ENCODE measurements at regions of chr15 and their contacts with region 1.

Region 1: GRCh38 chr15:88904624-88905327 is 8.4 kb downstream of the MFGE8 start:
- DNase-seq: peak; percentile 79
- ATAC-seq: peak; percentile 93
- H3K4me3 ChIP-seq: no peak overlapping the region
- H3K27ac ChIP-seq: no peak overlapping the region
- H3K4me1 ChIP-seq: peaks cover 10% of the 10 kb centered on the region
- H3K27me3 ChIP-seq: no peaks in the 10 kb centered on the region
- CTCF ChIP-seq: peak; percentile 95
- EP300 ChIP-seq: no peak
- POLR2A ChIP-seq: no peak
- RAD21 ChIP-seq: peak; percentile 81

Region 2: GRCh38 chr15:88932271-88932874 is 27.6 kb after region 1 on chr15:
- CTCF ChIA-PET with region 1: no interaction called
- POLR2A ChIA-PET with region 1: no interaction called
- in situ Hi-C with region 1: no loop called
- intact Hi-C with region 1: no loop called
- DNase-seq: peak; percentile 81
- ATAC-seq: peak; percentile 79
- H3K4me3 ChIP-seq: no peak overlapping the region
- H3K27ac ChIP-seq: no peak overlapping the region
- H3K4me1 ChIP-seq: peaks cover 26% of the 10 kb centered on the region
- H3K27me3 ChIP-seq: no peaks in the 10 kb centered on the region
- CTCF ChIP-seq: no peak
- EP300 ChIP-seq: no peak
- POLR2A ChIP-seq: no peak
- RAD21 ChIP-seq: no peak

Region 3: DNA sequence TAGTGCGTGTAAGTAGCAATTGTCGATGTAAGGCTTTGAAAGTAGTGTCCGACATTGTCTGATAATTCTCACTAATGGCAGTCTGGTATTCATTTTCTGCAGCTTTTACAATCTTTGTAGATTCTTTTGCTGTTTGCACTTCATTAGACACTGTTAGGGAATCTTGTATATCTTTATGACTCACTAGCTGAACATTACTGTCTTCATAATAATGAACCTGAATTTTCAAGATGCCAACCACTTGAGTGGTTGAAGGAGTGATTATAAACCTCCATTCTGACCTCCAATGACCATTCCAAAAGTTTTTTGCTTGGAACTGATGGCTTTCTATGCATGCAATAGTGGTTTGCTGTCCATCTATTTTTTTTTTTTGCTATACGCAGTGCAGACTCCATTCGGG is 84.8 kb after region 1 on chr15:
- CTCF ChIA-PET with region 1: no interaction called
- POLR2A ChIA-PET with region 1: no interaction called
- in situ Hi-C with region 1: no loop called
- intact Hi-C with region 1: no loop called
- DNase-seq: no peak
- ATAC-seq: no peak
- H3K4me3 ChIP-seq: no peak overlapping the region
- H3K27ac ChIP-seq: no peak overlapping the region
- H3K4me1 ChIP-seq: peaks cover 14% of the 10 kb centered on the region
- H3K27me3 ChIP-seq: no peaks in the 10 kb centered on the region
- CTCF ChIP-seq: no peak
- EP300 ChIP-seq: no peak
- POLR2A ChIP-seq: no peak
- RAD21 ChIP-seq: no peak

Region 4: GRCh38 chr15:89003865-89004725 is 99.3 kb after region 1 on chr15:
- CTCF ChIA-PET with region 1: interaction called, 8 read pairs
- POLR2A ChIA-PET with region 1: no interaction called
- in situ Hi-C with region 1: loop called (anchors 5 kb)
- intact Hi-C with region 1: loop called (anchors 1 kb)
- DNase-seq: peak; percentile 41
- ATAC-seq: peak; percentile 99
- H3K4me3 ChIP-seq: peak overlapping the region in 1 of 3 experiments; percentile 16; a peak in 1 of 6 replicates
- H3K27ac ChIP-seq: no peak overlapping the region
- H3K4me1 ChIP-seq: peaks cover 21% of the 10 kb centered on the region
- H3K27me3 ChIP-seq: peaks cover 0 to 4% of the 10 kb centered on the region in 2 experiments; a peak in 3 of 5 replicates
- CTCF ChIP-seq: peak; percentile 81
- EP300 ChIP-seq: no peak
- POLR2A ChIP-seq: no peak
- RAD21 ChIP-seq: peak; percentile 48; the same call in 1 of the 2 replicates

Region 5: DNA sequence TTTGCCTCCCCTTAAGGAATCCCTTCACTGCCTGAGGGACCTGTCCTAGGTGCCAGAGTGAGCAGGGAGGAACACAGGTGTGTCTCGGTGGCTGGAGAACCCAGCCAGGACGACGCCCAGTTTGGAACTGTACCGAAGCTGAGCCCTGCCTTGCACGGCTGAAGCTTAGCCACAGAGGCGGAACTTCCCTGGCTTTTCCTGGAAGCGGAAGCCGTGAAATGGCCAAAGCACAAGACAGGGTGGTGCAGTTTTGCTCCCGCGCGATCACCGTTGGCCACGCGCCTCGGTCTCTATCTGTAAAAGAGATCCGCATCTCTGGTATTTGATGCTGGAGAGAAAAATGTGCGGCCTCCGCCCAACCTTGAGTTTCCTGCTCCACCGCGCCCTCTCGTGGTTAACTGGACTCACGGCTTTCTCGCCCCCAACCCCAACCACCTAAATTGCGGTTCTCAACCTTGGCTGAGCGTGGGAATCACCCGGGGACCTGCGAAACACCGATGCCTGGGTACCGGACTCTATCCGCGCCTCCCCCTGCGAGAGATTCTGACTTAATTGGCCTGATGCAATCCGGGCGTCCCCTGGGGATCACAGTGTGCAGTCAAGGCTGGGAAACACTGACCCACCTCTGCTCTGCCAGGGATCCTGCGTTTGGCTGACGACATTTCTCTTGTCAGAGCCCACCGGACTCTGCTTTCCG is 112.7 kb after region 1 on chr15:
- CTCF ChIA-PET with region 1: interaction called, 25 read pairs
- POLR2A ChIA-PET with region 1: no interaction called
- in situ Hi-C with region 1: no loop called
- intact Hi-C with region 1: loop called (anchors 1 kb)
- DNase-seq: peak; percentile 54
- ATAC-seq: peak; percentile 94
- H3K4me3 ChIP-seq: no peak overlapping the region; a peak in 1 of 6 replicates
- H3K27ac ChIP-seq: no peak overlapping the region
- H3K4me1 ChIP-seq: no peaks in the 10 kb centered on the region
- H3K27me3 ChIP-seq: peaks cover 2 to 14% of the 10 kb centered on the region in 2 experiments; a peak in 4 of 5 replicates
- CTCF ChIP-seq: peak; percentile 86
- EP300 ChIP-seq: no peak
- POLR2A ChIP-seq: no peak
- RAD21 ChIP-seq: peak; percentile 64; the same call in 1 of the 2 replicates

Region 6: DNA sequence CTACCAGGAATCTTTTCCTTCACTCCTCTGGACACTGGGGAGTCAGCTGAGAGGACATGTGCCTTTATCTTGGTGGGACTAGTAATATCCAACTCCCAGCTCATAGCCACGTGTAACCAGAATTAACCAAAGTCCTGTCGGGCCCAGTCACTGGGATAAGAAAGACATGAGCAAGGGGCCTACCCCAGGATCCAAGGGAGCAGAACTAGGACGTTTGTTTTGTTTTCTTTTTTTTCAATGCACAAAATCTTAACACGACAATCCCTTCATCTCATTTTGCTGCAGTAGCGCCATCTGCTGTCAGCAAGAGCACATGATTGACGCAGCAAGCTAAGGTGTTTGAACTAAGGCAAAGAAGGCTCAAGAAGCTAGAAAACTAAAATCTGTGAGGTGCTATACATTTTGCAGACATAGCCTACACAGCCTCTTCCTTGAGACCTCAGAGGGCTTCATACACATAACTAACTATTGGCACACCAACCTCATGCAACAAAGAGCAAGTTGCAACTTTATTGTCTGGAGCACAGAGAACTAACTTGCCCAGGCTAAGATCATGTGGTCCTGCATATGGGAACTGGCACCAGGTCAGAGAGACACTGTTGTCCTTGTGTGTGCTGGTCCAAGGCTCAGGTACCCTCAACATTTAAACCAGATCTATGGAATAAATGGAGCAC is 273.0 kb after region 1 on chr15:
- CTCF ChIA-PET with region 1: interaction called, 6 read pairs
- POLR2A ChIA-PET with region 1: no interaction called
- in situ Hi-C with region 1: loop called (anchors 10 kb)
- intact Hi-C with region 1: loop called (anchors 10 kb)
- DNase-seq: peak; percentile 57
- ATAC-seq: peak; percentile 64
- H3K4me3 ChIP-seq: no peak overlapping the region
- H3K27ac ChIP-seq: no peak overlapping the region
- H3K4me1 ChIP-seq: no peaks in the 10 kb centered on the region
- H3K27me3 ChIP-seq: no peaks in the 10 kb centered on the region
- CTCF ChIP-seq: peak; percentile 87
- EP300 ChIP-seq: no peak
- POLR2A ChIP-seq: no peak
- RAD21 ChIP-seq: peak; percentile 83

Region 7: DNA sequence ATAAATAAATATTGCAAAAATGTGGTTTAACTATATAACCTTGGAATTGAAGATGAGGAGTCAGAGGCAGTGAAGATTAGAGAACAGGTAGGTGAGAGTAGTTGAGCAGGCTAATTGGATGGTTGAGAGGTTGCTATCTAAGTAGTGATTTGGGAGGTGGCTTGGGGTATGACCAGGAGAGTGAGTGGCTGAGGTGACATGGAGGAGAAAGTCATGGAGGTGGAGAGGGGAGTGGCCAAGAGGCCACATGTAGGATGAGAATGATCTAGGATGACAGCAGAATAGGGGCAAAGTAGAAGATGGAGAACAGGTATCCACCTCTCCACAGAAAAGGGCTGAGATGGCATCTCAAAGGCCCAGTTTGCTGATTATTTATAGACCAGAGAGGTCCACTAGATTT is 327.1 kb after region 1 on chr15:
- CTCF ChIA-PET with region 1: no interaction called
- POLR2A ChIA-PET with region 1: no interaction called
- in situ Hi-C with region 1: no loop called
- intact Hi-C with region 1: no loop called
- DNase-seq: no peak
- ATAC-seq: no peak
- H3K4me3 ChIP-seq: no peak overlapping the region
- H3K27ac ChIP-seq: no peak overlapping the region
- H3K4me1 ChIP-seq: peaks cover 7% of the 10 kb centered on the region; the same call in 1 of the 2 replicates
- H3K27me3 ChIP-seq: peaks cover 0 to 9% of the 10 kb centered on the region in 2 experiments; a peak in 2 of 5 replicates
- CTCF ChIP-seq: no peak
- EP300 ChIP-seq: no peak
- POLR2A ChIP-seq: no peak
- RAD21 ChIP-seq: no peak

Measured in HepG2 (cell line).